ENCODE measurements at regions of chr18 and their contacts with region 1.

Region 1: GRCh38 chr18:58349650-58350049 is 279.2 kb downstream of the ALPK2 start:
- DNase-seq: no peak
- CTCF ChIP-seq: no peak

Region 2: DNA sequence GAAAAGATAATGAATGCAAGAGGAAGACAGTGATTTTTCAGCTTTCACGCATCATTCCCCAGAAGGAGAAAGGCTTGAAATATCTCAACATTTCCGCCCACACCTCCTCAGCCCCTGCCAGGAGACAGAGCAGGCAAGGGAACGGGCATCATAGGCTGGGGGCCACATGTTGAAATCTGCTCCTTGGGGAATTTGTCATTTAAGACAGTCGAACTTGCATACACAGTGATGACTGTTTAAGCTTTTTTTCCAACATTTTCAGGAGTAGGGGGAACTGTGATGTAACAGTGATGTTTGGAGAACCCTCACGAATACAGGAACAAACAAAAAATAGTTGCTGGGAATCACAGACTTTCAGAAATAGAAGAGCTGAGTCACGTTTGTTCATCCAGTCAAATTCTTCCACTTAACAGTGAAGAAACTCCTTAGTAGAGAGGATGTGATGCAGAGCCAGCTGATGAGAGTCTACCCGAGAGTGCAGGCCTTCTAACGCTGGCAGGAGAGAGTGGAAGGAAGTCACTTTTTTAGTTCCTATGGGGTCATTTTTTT is 12.5 kb after region 1 on chr18:
- CTCF ChIA-PET with region 1: interaction called, 12 read pairs
- POLR2A ChIA-PET with region 1: no interaction called
- DNase-seq: no peak
- CTCF ChIP-seq: no peak